ENCODE measurements at regions of chr12 and their contacts with region 1.

Region 1: DNA sequence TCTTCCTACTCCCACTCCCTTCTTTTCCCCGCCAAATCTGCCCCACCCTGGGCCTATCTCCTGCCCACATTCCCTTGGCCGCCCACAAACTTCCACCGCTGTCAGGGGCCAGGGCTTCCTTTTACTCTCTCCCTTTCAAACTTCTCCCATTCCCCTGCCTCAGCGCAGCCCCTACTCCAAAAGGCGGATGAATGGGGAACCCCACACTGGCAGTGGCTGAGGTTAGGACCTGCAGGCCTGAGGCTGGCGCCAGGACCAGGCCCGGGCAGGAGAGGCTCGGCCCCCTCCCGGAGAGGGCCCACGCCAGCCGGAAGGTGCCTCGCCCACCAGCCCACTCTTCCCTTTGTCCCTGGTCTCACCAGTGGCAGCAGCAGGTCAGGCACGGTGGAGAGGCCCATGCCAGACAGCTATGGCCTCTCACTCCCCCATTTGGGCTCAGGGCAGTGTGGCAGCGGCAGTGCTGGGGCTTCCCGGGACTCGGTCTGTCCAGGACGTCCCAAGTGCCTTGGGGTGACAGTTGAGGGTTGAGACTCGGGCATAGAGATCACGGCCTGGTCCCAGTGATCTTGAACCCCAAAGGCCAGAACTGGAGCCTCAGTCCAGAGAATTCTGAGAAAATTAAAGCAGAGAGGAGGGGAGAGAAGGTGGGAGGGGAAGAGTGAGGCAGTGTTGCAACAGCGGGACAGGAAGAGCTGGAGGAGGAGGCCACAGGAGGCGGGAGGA is at the start of gene TNFRSF1A:
- DNase-seq: peak; percentile 65
- ATAC-seq: peak; percentile 56
- H3K4me3 ChIP-seq: peak within 1 kb of the TSS; percentile 85 to 99 (median 97)
- H3K27ac ChIP-seq: peak within 1 kb of the TSS; percentile 82
- H3K4me1 ChIP-seq: peaks cover 80% of the 10 kb centered on the region
- H3K27me3 ChIP-seq: no peaks in the 10 kb centered on the region; a peak in 1 of 5 replicates
- CTCF ChIP-seq: no peak
- EP300 ChIP-seq: peak; percentile 36 to 54; a peak in 1 of 4 replicates
- POLR2A ChIP-seq: no peak; a peak in 1 of 4 replicates
- RAD21 ChIP-seq: no peak; the same call in 1 of the 2 replicates
- total RNA-seq, gene TNFRSF1A: 21.9 and 41.5 TPM in 2 replicates

Region 2: GRCh38 chr12:6383572-6384498 is 42.3 kb after region 1 on chr12 and contains the start of gene LTBR:
- CTCF ChIA-PET with region 1: no interaction called
- POLR2A ChIA-PET with region 1: interaction called, 140 read pairs
- in situ Hi-C with region 1: no loop called
- intact Hi-C with region 1: no loop called
- DNase-seq: peak; percentile 83
- ATAC-seq: peak; percentile 91
- H3K4me3 ChIP-seq: peak within 1 kb of the TSS; percentile 81 to 95 (median 87)
- H3K27ac ChIP-seq: peak within 1 kb of the TSS; percentile 86
- H3K4me1 ChIP-seq: peaks cover 59% of the 10 kb centered on the region
- H3K27me3 ChIP-seq: no peaks in the 10 kb centered on the region; a peak in 1 of 5 replicates
- CTCF ChIP-seq: peak; percentile 52; the same call in 1 of the 2 replicates
- EP300 ChIP-seq: peak in 1 of 2 experiments; percentile 33; a peak in 1 of 4 replicates
- POLR2A ChIP-seq: peak; percentile 67 to 74; a peak in 3 of 4 replicates
- RAD21 ChIP-seq: peak; percentile 36; the same call in 1 of the 2 replicates
- total RNA-seq, gene LTBR: 12.1 and 34.8 TPM in 2 replicates

Measured in HepG2 (cell line).